Ovary (tissue), 10 donors: ENCODE measurements at regions of chr16 and their contacts with region 1.

Region 1: GRCh38 chr16:28915181-28915580 is 9.9 kb downstream of the RABEP2 start:
- DNase-seq: no peak
- H3K4me3 ChIP-seq: no peak overlapping the region
- H3K27ac ChIP-seq: no peak overlapping the region
- H3K4me1 ChIP-seq: no peaks in the 10 kb centered on the region
- H3K27me3 ChIP-seq: no peaks in the 10 kb centered on the region
- CTCF ChIP-seq: no peak
- EP300 ChIP-seq: no peak
- POLR2A ChIP-seq: no peak

Region 2: DNA sequence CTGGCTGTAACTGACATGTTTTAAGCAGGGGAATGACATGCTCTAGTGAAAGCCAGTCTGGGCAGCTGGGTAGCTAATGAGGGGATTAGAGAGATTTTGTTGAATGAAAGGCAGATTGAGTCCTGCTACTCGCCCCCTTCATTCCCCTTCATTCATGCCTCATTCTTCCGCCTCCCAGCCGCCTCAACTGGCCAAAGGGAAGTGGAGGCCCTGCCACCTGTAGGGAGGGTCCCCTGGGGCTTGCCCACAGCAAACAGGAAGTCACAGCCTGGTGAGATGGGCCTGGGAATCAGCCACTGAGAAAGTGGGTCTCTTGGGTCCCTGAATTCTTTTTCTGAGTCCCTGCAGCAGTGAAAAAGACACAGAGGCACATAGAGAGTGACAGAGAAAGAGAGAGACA is 15.5 kb after region 1 on chr16:
- intact Hi-C with region 1: loop called in 1 of 4 experiments (anchors 2 kb)
- DNase-seq: no peak
- H3K4me3 ChIP-seq: no peak overlapping the region
- H3K27ac ChIP-seq: no peak overlapping the region
- H3K4me1 ChIP-seq: no peaks in the 10 kb centered on the region
- H3K27me3 ChIP-seq: no peaks in the 10 kb centered on the region
- CTCF ChIP-seq: no peak
- EP300 ChIP-seq: no peak
- POLR2A ChIP-seq: no peak